Mammary epithelial cell (primary cell): ENCODE measurements at regions of chr1 and their contacts with region 1.

Region 1: GRCh38 chr1:246002725-246003441 is 504.2 kb downstream of the SMYD3 start:
- DNase-seq: peak; percentile 70
- H3K4me3 ChIP-seq: no peak overlapping the region
- H3K27ac ChIP-seq: no peak overlapping the region
- H3K4me1 ChIP-seq: peaks cover 33% of the 10 kb centered on the region
- H3K27me3 ChIP-seq: no peaks in the 10 kb centered on the region
- CTCF ChIP-seq: peak; percentile 80 to 90

Region 2: GRCh38 chr1:245079021-245079609 is 923.8 kb before region 1 on chr1:
- CTCF ChIA-PET with region 1: no interaction called
- dilution Hi-C with region 1: no loop called
- in situ Hi-C with region 1: no loop called
- intact Hi-C with region 1: loop called (anchors 2 kb)
- DNase-seq: peak; percentile 26
- H3K4me3 ChIP-seq: no peak overlapping the region
- H3K27ac ChIP-seq: no peak overlapping the region
- H3K4me1 ChIP-seq: no peaks in the 10 kb centered on the region
- H3K27me3 ChIP-seq: no peaks in the 10 kb centered on the region
- CTCF ChIP-seq: peak; percentile 81 to 90

Region 3: DNA sequence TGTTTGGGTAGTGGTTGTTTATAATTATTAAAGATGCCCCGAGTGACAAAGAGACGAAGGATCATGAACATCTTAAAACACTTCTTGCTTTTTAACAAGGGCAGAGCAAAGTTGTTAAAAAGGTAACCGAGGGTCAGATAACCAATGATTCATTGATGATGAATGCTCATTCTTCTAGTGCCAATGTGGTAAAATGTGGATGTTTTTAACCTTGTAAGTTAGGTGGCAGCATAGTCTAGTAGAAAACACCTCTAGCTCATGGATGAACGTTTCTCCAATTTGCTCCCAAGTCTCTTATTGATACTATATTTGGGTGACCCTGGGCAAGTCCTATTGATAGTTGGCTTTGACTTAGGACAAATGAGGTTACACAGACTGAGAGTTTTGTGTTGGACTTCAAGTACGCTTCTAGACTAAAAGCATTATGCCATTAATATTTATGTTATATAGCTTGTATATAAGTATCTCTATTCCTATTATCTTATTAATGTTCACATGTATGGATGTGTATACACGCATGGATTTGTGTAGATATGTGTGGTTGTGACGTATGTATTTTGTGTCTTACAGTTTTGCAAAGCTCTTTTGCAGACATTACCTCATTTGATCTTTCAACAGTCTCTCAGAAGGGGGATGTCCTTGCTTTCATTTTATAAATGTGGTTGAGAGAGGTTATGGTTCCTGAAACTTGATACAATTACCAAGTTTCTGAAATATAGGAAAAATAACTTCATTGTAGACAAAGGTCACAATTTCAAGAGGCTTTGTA is 680.0 kb before region 1 on chr1:
- CTCF ChIA-PET with region 1: no interaction called
- dilution Hi-C with region 1: no loop called
- in situ Hi-C with region 1: no loop called
- intact Hi-C with region 1: loop called (anchors 1 kb)
- DNase-seq: peak; percentile 50
- H3K4me3 ChIP-seq: no peak overlapping the region
- H3K27ac ChIP-seq: no peak overlapping the region
- H3K4me1 ChIP-seq: no peaks in the 10 kb centered on the region
- H3K27me3 ChIP-seq: no peaks in the 10 kb centered on the region
- CTCF ChIP-seq: peak in 1 of 2 donors; percentile 22

Region 4: DNA sequence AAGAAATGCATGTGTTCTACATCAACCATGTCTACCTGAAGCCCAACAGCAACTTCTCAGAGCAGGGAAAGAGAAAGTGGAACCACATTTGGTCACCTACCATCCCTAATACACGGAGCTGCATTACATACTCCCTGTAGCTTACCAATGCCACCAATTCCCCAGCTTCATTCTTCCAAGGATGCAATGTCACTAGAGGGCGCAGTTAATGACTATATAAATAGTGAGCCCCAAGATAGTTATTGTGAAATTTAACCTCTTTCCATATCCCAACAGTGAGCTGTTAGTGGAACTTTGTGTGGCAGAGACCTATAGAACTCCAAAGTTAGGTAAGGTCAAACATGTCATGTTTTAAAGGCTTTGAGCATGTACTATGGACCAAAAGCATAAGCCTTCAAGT is 114.1 kb before region 1 on chr1:
- CTCF ChIA-PET with region 1: no interaction called
- dilution Hi-C with region 1: no loop called
- in situ Hi-C with region 1: no loop called
- intact Hi-C with region 1: loop called (anchors 5 kb)
- DNase-seq: peak; percentile 35
- H3K4me3 ChIP-seq: no peak overlapping the region
- H3K27ac ChIP-seq: no peak overlapping the region
- H3K4me1 ChIP-seq: no peaks in the 10 kb centered on the region
- H3K27me3 ChIP-seq: no peaks in the 10 kb centered on the region
- CTCF ChIP-seq: peak; percentile 24 to 52

Region 5: GRCh38 chr1:245990315-245991022 is 12.4 kb before region 1 on chr1:
- CTCF ChIA-PET with region 1: no interaction called
- dilution Hi-C with region 1: no loop called
- in situ Hi-C with region 1: no loop called
- intact Hi-C with region 1: no loop called
- DNase-seq: no peak
- H3K4me3 ChIP-seq: no peak overlapping the region
- H3K27ac ChIP-seq: no peak overlapping the region
- H3K4me1 ChIP-seq: no peaks in the 10 kb centered on the region
- H3K27me3 ChIP-seq: no peaks in the 10 kb centered on the region
- CTCF ChIP-seq: no peak

Region 6: GRCh38 chr1:246280551-246280950 is 277.7 kb after region 1 on chr1:
- CTCF ChIA-PET with region 1: no interaction called
- dilution Hi-C with region 1: no loop called
- in situ Hi-C with region 1: loop called in 1 of 2 experiments (anchors 25 kb)
- intact Hi-C with region 1: no loop called
- DNase-seq: no peak
- H3K4me3 ChIP-seq: no peak overlapping the region
- H3K27ac ChIP-seq: no peak overlapping the region
- H3K4me1 ChIP-seq: no peaks in the 10 kb centered on the region
- H3K27me3 ChIP-seq: no peaks in the 10 kb centered on the region
- CTCF ChIP-seq: peak in 1 of 2 donors; percentile 40

Region 7: GRCh38 chr1:246428542-246429308 is 425.8 kb after region 1 on chr1:
- CTCF ChIA-PET with region 1: no interaction called
- dilution Hi-C with region 1: no loop called
- in situ Hi-C with region 1: loop called in 1 of 2 experiments (anchors 25 kb)
- intact Hi-C with region 1: no loop called
- DNase-seq: peak; percentile 98
- H3K4me3 ChIP-seq: no peak overlapping the region
- H3K27ac ChIP-seq: peak overlapping the region; percentile 56
- H3K4me1 ChIP-seq: peaks cover 37% of the 10 kb centered on the region
- H3K27me3 ChIP-seq: no peaks in the 10 kb centered on the region
- CTCF ChIP-seq: no peak

Region 8: GRCh38 chr1:246699095-246699735 is 696.3 kb after region 1 on chr1:
- CTCF ChIA-PET with region 1: no interaction called
- dilution Hi-C with region 1: no loop called
- in situ Hi-C with region 1: no loop called
- intact Hi-C with region 1: loop called (anchors 5 kb)
- DNase-seq: peak; percentile 75
- H3K4me3 ChIP-seq: no peak overlapping the region
- H3K27ac ChIP-seq: no peak overlapping the region
- H3K4me1 ChIP-seq: no peaks in the 10 kb centered on the region
- H3K27me3 ChIP-seq: no peaks in the 10 kb centered on the region
- CTCF ChIP-seq: peak; percentile 63 to 87